HCT116 (cell line): ENCODE measurements at regions of chr12 and their contacts with region 1.

Region 1: GRCh38 chr12:64696080-64696741 is 63.0 kb downstream of the GNS start:
- DNase-seq: no peak
- ATAC-seq: 0 out of 2 replicates have a peak, but pooled peaks have one; percentile 25
- H3K4me3 ChIP-seq: no peak overlapping the region
- H3K27ac ChIP-seq: no peak overlapping the region
- H3K4me1 ChIP-seq: peaks cover 6 to 15% of the 10 kb centered on the region in 2 experiments; a peak in 2 of 4 replicates
- H3K27me3 ChIP-seq: no peaks in the 10 kb centered on the region
- CTCF ChIP-seq: peak; percentile 11 to 52 (median 48); a peak in 3 of 6 replicates
- POLR2A ChIP-seq: no peak
- RAD21 ChIP-seq: peak; percentile 80

Region 2: DNA sequence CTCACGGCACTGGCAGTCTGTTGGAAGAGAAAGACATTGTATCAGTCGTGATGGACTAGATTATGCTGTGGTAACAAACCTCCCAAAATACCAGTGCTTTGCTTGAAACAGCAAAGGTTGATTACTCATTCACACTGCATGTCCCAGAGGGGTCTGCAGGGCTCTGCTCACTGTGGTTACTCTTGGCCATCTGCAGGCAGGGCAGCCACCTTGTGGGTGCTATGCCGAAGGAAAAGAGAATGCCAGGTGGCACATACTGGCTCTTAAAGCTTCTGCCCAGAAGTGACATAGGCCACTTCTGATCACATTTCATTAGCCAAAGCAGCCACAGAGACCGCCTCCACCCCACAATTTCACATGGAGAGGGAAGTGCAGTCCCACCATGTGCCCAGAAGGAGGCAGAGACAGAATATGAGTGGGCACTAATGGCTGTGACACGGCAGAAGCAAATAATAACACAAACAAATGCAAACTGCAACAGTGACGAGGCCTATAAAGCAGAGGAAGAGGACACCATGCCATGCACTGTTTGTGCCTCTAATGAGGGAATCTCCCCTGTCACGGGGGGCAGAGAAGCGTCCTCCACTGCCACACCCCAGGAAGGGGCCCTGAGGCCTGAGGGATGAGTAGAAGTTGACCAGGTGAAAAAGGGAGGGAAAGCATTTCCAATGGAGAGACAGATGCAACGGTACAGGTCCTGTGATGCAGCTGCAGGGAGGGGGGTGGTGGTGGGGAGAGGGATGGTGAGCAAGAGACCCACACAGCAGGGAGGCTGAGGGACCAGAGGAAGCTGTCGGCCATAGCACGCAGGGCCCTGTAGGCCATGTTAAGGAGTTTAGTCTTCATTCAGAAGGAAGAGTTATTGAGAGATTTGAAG is 422.4 kb before region 1 on chr12:
- CTCF ChIA-PET with region 1: interaction called, 3 read pairs
- POLR2A ChIA-PET with region 1: no interaction called
- RAD21 ChIA-PET with region 1: no interaction called
- intact Hi-C with region 1: loop called (anchors 2 kb)
- DNase-seq: peak; percentile 53
- ATAC-seq: peak; percentile 97
- H3K4me3 ChIP-seq: no peak overlapping the region
- H3K27ac ChIP-seq: no peak overlapping the region
- H3K4me1 ChIP-seq: peaks cover 0 to 7% of the 10 kb centered on the region in 2 experiments; a peak in 1 of 4 replicates
- H3K27me3 ChIP-seq: no peaks in the 10 kb centered on the region
- CTCF ChIP-seq: peak; percentile 69 to 82 (median 74)
- POLR2A ChIP-seq: no peak
- RAD21 ChIP-seq: peak; percentile 89

Region 3: GRCh38 chr12:64451687-64452558 is 244.3 kb before region 1 on chr12 and contains the start of gene TBK1:
- CTCF ChIA-PET with region 1: interaction called, 4 read pairs
- POLR2A ChIA-PET with region 1: no interaction called
- RAD21 ChIA-PET with region 1: no interaction called
- intact Hi-C with region 1: loop called (anchors 5 kb)
- DNase-seq: peak; percentile 67
- ATAC-seq: peak; percentile 87
- H3K4me3 ChIP-seq: peak within 1 kb of the TSS; percentile 86 to 90
- H3K27ac ChIP-seq: peak within 1 kb of the TSS; percentile 91
- H3K4me1 ChIP-seq: peaks cover 7 to 21% of the 10 kb centered on the region in 2 experiments
- H3K27me3 ChIP-seq: no peaks in the 10 kb centered on the region
- CTCF ChIP-seq: no peak
- POLR2A ChIP-seq: peak; percentile 52
- RAD21 ChIP-seq: no peak
- total RNA-seq, gene TBK1: 27.0 TPM

Region 4: DNA sequence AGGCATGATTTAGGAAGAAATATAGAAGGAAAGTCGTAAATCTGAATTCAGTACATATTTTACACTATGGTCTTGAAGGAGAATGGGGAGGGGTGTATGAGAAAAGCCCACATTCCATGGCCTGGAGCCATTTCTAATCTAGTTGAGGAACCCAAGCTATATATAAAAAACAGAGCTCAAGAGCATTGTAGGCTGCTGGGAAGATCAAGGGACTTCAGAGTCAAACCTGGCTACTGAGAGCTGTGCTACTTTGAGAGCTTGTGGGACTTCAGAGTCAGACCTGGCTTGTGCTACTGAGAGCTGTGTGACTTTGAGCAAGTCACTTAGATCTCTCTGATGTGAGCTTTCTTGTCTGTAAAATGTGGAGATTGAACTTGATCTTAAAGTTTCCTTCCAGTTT is 185.5 kb before region 1 on chr12:
- CTCF ChIA-PET with region 1: no interaction called
- POLR2A ChIA-PET with region 1: no interaction called
- RAD21 ChIA-PET with region 1: no interaction called
- intact Hi-C with region 1: no loop called
- DNase-seq: no peak
- ATAC-seq: no peak
- H3K4me3 ChIP-seq: no peak overlapping the region
- H3K27ac ChIP-seq: no peak overlapping the region
- H3K4me1 ChIP-seq: no peaks in the 10 kb centered on the region
- H3K27me3 ChIP-seq: no peaks in the 10 kb centered on the region
- CTCF ChIP-seq: no peak
- POLR2A ChIP-seq: no peak
- RAD21 ChIP-seq: no peak

Region 5: DNA sequence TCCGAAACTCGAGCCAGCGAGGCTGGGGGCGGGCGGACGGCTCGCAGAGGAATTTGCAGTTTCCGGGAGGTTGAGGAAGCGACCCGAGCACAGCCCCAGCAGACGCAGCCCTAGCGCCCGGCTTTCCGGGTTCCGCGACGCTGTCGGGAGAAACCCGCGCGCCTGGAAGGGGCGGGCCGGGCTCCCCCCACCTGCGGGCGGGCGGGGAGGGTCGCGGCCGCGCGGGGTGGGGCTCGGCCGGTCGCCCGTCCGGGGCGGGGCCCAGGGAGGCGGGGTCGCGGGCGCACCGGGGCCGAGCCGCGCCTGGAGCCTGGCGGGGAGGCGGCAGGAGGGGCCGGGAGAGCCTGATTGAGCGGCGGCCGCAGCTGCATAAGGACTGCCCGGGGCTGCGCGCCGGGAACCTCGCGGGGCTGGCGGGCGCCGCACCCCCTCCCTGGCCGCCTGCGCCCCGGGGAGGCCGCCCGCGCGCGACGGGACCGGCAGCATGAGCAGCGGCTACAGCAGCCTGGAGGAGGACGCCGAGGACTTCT is 86.0 kb before region 1 on chr12 and contains the start of gene RASSF3:
- CTCF ChIA-PET with region 1: interaction called, 13 read pairs
- POLR2A ChIA-PET with region 1: no interaction called
- RAD21 ChIA-PET with region 1: interaction called in 1 of 2 experiments, 5 read pairs
- intact Hi-C with region 1: loop called (anchors 5 kb)
- DNase-seq: peak; percentile 38
- ATAC-seq: peak; percentile 69
- H3K4me3 ChIP-seq: peak within 1 kb of the TSS; percentile 89 to 96
- H3K27ac ChIP-seq: peak within 1 kb of the TSS; percentile 81
- H3K4me1 ChIP-seq: peaks cover 13 to 40% of the 10 kb centered on the region in 2 experiments
- H3K27me3 ChIP-seq: no peaks in the 10 kb centered on the region
- CTCF ChIP-seq: no peak
- POLR2A ChIP-seq: no peak
- RAD21 ChIP-seq: no peak
- total RNA-seq, gene RASSF3: 67.1 TPM

Region 6: GRCh38 chr12:65170209-65170881 is 474.1 kb after region 1 on chr12:
- CTCF ChIA-PET with region 1: no interaction called
- POLR2A ChIA-PET with region 1: no interaction called
- RAD21 ChIA-PET with region 1: no interaction called
- intact Hi-C with region 1: no loop called
- DNase-seq: peak; percentile 28
- ATAC-seq: peak; percentile 62
- H3K4me3 ChIP-seq: peak overlapping the region; percentile 73 to 84
- H3K27ac ChIP-seq: peak overlapping the region; percentile 80
- H3K4me1 ChIP-seq: peaks cover 7 to 15% of the 10 kb centered on the region in 2 experiments
- H3K27me3 ChIP-seq: no peaks in the 10 kb centered on the region
- CTCF ChIP-seq: no peak
- POLR2A ChIP-seq: no peak
- RAD21 ChIP-seq: no peak